SK-N-SH (cell line): ENCODE measurements at regions of chr1 and their contacts with region 1.

Region 1: GRCh38 chr1:111507411-111508201 is 4.2 kb upstream of the ADORA3 start:
- DNase-seq: peak; percentile 57
- H3K4me3 ChIP-seq: peak overlapping the region; percentile 24 to 42; a peak in 2 of 4 replicates
- H3K27ac ChIP-seq: peak overlapping the region; percentile 56 to 73; a peak in 3 of 4 replicates
- H3K4me1 ChIP-seq: peaks cover 8 to 9% of the 10 kb centered on the region in 2 experiments; a peak in 2 of 4 replicates
- H3K27me3 ChIP-seq: no peaks in the 10 kb centered on the region; the same call in 1 of the 2 replicates
- CTCF ChIP-seq: no peak
- EP300 ChIP-seq: no peak
- RAD21 ChIP-seq: no peak

Region 2: DNA sequence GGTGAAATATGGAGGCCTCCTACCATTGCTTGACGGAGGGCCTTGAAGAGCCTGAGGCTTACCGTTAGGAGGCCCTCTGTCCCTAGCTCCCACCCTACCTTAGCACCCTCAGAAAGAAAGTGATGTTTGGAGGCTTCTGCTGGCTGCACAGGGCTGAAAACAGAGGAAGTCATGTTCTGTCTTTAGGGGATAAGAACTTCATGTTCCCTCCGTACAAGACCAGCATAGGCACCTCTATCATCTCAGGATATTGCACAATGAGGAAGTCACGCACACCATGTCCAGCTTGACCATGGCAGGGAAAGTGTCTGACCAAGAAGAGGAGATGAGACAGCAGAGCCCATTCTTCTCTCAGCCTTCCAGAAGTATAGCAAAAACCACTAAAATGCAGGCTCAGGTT is 18.0 kb before region 1 on chr1:
- CTCF ChIA-PET with region 1: interaction called, 49 read pairs
- POLR2A ChIA-PET with region 1: no interaction called
- DNase-seq: no peak
- H3K4me3 ChIP-seq: no peak overlapping the region
- H3K27ac ChIP-seq: no peak overlapping the region
- H3K4me1 ChIP-seq: peaks cover 0 to 3% of the 10 kb centered on the region in 2 experiments; a peak in 1 of 4 replicates
- H3K27me3 ChIP-seq: no peaks in the 10 kb centered on the region
- CTCF ChIP-seq: no peak
- EP300 ChIP-seq: no peak
- RAD21 ChIP-seq: no peak

Region 3: DNA sequence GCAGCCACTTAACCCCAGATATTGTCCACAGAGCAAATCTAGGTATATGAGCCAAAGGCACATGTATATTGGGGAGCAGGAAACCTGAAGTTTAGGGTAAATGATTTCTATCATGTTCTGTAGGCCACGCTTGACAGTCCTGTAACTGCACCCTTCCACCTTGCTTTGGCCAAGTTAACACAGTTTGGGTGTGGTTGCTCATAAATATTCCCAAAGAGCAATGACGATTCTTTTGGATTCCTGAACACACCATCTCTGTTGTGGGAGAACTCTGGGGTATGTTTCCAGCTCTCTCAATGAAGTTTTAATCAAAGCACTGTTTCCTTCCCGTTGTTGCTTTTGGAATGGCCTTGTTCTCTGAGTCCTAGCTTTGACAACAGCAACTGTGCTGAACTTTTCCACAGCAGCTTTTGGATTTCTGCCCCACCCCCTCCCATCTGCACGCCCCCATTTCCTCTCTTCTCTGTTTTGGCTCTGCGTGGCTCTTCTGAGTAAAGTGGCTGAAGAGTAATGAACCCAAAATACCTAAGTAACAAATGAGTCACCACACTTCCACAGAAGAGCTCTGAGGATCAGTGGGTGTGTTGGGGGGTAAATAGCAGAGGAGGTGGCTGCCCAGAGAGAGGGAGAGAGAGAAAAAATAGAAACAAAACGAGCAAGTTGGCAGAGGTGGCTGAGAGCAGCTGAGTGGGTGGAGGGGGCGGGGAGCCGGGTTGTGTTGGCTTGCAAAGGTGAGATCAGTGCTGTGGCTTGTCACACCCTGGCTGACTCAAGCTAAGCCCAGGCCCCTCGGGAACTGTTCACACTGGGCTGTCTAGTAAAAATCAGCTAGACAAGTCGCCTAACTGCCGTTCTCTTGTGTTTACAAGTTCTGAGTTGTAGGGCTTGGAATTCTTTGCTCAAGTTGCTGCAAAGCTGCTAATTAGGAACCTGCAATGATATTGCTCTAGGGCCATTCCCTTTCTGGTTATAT is 85.1 kb after region 1 on chr1:
- CTCF ChIA-PET with region 1: interaction called, 15 read pairs
- POLR2A ChIA-PET with region 1: no interaction called
- DNase-seq: no peak
- H3K4me3 ChIP-seq: no peak overlapping the region
- H3K27ac ChIP-seq: peak overlapping the region; percentile 49 to 66
- H3K4me1 ChIP-seq: peaks cover 15 to 16% of the 10 kb centered on the region in 2 experiments; a peak in 3 of 4 replicates
- H3K27me3 ChIP-seq: no peaks in the 10 kb centered on the region
- CTCF ChIP-seq: no peak
- EP300 ChIP-seq: no peak
- RAD21 ChIP-seq: no peak

Region 4: DNA sequence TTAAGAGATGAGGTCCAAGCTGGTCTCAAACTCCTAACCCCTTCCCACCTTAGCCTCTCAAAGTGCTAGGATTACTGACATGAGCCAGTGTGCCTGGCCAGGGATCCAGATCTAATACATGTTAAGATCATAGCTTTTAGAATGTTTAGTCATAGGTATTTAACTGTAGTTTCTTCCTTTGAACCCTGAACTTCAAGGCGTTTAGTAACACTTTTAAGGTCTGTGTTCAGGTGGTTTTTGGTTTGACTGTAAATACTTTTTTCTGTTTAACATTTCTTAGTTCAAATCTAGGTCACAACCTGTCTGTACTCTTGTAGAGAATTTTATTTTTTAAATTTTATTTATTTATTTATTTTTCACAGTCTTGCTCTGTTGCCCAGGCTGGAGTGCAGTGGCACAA is 140.1 kb after region 1 on chr1:
- CTCF ChIA-PET with region 1: interaction called, 13 read pairs
- POLR2A ChIA-PET with region 1: no interaction called
- DNase-seq: no peak
- H3K4me3 ChIP-seq: no peak overlapping the region
- H3K27ac ChIP-seq: no peak overlapping the region
- H3K4me1 ChIP-seq: no peaks in the 10 kb centered on the region
- H3K27me3 ChIP-seq: no peaks in the 10 kb centered on the region
- CTCF ChIP-seq: no peak
- EP300 ChIP-seq: no peak
- RAD21 ChIP-seq: no peak

Region 5: DNA sequence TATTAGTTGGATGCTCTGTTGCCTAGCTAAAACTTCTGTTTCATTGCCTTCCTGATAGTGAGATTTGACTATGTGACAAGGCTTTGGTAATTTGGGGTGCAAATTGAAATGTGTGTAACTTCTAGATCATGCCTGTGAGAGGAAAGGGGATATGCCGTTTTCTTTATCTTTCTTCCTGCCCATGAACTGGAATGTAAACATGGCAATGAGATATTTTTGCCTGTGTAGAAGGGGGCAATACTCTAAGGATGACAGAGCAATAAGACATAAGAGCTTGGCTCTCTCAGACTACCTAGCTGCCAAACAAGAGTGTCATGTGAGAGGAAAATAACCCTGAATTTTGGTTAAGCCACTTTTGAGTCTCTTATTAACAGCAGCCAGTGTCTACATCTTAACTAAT is 161.7 kb after region 1 on chr1:
- CTCF ChIA-PET with region 1: interaction called, 14 read pairs
- POLR2A ChIA-PET with region 1: no interaction called
- DNase-seq: no peak
- H3K4me3 ChIP-seq: no peak overlapping the region
- H3K27ac ChIP-seq: no peak overlapping the region
- H3K4me1 ChIP-seq: no peaks in the 10 kb centered on the region
- H3K27me3 ChIP-seq: no peaks in the 10 kb centered on the region
- CTCF ChIP-seq: no peak
- EP300 ChIP-seq: no peak
- RAD21 ChIP-seq: no peak

Region 6: DNA sequence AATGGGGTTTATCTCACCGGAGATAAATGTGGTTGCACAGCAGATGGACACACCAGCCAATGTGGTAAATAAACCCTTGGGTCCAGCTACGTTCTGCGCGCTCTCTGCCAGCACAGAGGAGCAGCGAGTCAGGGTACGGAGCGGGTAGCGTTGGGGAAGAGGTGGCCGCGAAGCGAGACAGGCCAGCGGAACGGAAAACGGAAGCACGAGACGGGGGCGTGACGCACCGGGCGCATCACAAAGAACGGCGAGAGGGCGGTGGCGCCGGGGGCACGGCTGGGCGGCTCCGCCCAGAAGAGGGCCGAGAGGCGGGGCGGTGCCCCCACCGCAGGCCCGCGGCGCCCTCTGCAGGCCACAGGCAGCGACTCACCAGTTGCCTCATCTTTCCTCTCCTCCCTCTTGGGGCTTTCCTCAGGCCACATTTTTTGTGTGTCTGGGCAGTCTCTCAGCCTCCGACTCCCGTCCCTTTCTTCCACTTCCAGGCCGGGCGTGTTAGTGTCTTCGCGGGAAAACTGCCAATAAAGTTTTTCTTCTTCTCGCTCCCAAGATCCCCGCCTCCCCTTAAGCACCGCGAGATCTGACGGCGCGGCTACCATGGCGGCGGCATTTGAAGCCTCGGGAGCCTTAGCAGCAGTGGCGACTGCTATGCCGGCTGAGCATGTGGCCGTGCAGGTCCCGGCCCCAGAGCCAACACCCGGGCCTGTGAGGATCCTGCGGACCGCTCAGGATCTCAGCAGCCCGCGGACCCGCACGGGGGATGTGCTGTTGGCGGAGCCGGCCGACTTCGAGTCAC is 247.9 kb after region 1 on chr1 and contains the start of gene DDX20:
- CTCF ChIA-PET with region 1: interaction called, 36 read pairs
- POLR2A ChIA-PET with region 1: no interaction called
- DNase-seq: peak; percentile 97
- H3K4me3 ChIP-seq: peak within 1 kb of the TSS; percentile 96 to 99
- H3K27ac ChIP-seq: peak within 1 kb of the TSS; percentile 96 to 99
- H3K4me1 ChIP-seq: peaks cover 9 to 11% of the 10 kb centered on the region in 2 experiments; a peak in 3 of 4 replicates
- H3K27me3 ChIP-seq: no peaks in the 10 kb centered on the region
- CTCF ChIP-seq: peak; percentile 98
- EP300 ChIP-seq: peak in 1 of 2 experiments; percentile 39; a peak in 1 of 4 replicates
- RAD21 ChIP-seq: peak; percentile 72
- polyA plus RNA-seq, gene DDX20: 3.8 and 5.3 TPM in 2 replicates